ENCODE measurements at regions of chr10 and their contacts with region 1.

Region 1: GRCh38 chr10:63504125-63504880 is 16.9 kb upstream of the REEP3 start:
- DNase-seq: peak in 1 of 4 experiments; percentile 39
- ATAC-seq: peak; percentile 65
- H3K4me3 ChIP-seq: no peak overlapping the region
- H3K27ac ChIP-seq: peak overlapping the region; percentile 63
- H3K4me1 ChIP-seq: peaks cover 5 to 22% of the 10 kb centered on the region in 2 experiments; a peak in 4 of 5 replicates
- H3K27me3 ChIP-seq: no peaks in the 10 kb centered on the region
- CTCF ChIP-seq: peak in 1 of 3 experiments; percentile 23; a peak in 1 of 6 replicates
- EP300 ChIP-seq: no peak
- POLR2A ChIP-seq: no peak
- RAD21 ChIP-seq: no peak

Region 2: DNA sequence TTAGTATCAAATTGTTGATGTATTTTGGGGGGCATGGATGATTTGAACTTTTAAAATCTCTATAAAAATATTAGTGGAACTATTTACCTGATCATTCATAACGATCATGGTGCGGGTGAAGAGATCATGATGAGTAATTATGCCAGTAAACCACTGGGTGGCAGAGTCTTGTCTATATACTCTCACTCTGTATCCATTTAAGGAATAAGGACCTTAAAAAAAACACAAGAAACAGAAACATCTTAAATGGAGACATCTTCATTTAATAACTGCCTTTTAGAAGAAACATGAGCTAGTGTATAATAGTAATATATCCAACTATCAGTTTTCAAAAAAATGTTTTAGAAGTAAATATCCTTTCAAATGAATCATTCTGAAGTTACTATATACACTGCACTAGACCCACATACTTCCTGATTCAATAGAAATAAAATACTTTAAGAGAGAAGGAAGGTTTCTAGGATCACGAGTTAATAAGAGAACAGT is 287.1 kb before region 1 on chr10:
- CTCF ChIA-PET with region 1: no interaction called
- POLR2A ChIA-PET with region 1: no interaction called
- in situ Hi-C with region 1: no loop called
- intact Hi-C with region 1: no loop called
- DNase-seq: peak in 2 of 4 experiments; percentile 39 to 61
- ATAC-seq: peak; percentile 79
- H3K4me3 ChIP-seq: no peak overlapping the region
- H3K27ac ChIP-seq: no peak overlapping the region
- H3K4me1 ChIP-seq: no peaks in the 10 kb centered on the region
- H3K27me3 ChIP-seq: no peaks in the 10 kb centered on the region
- CTCF ChIP-seq: peak; percentile 38 to 77 (median 47); a peak in 3 of 6 replicates
- EP300 ChIP-seq: no peak
- POLR2A ChIP-seq: no peak
- RAD21 ChIP-seq: peak; percentile 87 to 90

Region 3: DNA sequence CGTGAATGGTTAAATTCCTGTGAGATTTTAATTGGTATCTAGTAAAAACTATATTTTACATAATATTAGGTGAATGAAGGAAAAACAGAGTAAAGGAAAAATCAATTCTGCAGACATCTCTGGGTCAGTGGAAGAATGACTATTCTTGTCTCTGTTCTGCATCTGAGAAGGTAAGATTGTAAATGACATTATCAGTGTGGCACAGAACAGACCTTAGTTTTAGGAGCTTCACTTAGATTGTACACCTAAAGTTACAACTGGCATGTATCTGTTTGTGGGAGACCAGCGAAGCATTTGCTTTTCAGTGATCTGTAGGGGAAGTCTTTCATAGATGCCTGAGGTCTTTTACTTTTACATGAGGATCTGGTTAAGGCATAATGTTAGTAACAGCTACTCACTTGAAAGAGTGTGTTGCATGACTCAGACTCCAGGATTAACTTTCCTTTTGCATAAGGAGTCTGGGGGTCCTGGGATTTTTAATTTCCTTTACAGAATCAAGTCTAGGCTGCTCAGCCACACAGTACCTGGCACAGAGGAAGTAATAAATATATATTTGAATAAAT is 94.8 kb before region 1 on chr10:
- CTCF ChIA-PET with region 1: no interaction called
- POLR2A ChIA-PET with region 1: no interaction called
- in situ Hi-C with region 1: no loop called
- intact Hi-C with region 1: no loop called
- DNase-seq: peak in 2 of 4 experiments; percentile 28 to 29
- ATAC-seq: peak; percentile 69
- H3K4me3 ChIP-seq: no peak overlapping the region
- H3K27ac ChIP-seq: peak overlapping the region; percentile 47; the same call in 1 of the 3 replicates
- H3K4me1 ChIP-seq: peaks cover 0 to 14% of the 10 kb centered on the region in 2 experiments; a peak in 3 of 5 replicates
- H3K27me3 ChIP-seq: no peaks in the 10 kb centered on the region
- CTCF ChIP-seq: no peak
- EP300 ChIP-seq: no peak
- POLR2A ChIP-seq: no peak
- RAD21 ChIP-seq: no peak

Region 4: DNA sequence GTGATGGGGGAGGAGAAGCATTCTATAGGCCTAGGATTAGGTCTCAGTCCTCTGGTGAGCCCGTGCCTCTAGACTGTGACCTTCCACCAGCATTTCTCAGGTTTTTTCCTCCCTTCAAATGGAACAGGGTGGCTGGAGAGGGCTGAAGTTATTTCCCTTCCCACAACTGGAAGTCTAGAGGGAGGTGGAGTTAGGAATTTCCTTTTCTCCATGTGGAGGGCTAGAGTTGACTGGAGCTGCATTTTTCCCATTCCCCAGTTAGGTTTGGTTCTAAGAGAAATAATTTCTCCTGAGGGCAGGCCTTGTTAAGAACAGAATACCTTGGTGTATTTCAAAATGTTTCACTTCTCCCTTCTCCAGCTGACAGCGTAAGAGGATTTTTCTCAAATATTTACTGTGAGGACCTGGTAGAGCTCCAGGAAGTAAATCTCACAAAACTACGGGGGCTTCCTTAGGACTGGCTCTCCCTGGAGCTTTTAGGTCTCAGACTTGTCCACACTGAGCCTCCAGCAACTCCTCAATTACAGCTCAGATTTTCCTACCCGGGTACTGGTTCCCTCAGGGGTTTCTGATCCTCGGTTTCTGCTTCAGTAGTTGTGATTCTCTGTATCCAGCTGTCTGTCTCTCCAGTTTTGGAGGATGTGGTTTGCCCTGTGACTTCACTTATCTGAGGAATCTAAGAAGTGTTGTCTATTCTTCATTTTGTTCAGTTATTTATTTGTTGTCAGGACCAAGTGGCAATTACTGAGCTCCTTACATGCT is 10.9 kb after region 1 on chr10:
- CTCF ChIA-PET with region 1: no interaction called
- POLR2A ChIA-PET with region 1: interaction called, 46 read pairs
- in situ Hi-C with region 1: no loop called
- intact Hi-C with region 1: no loop called
- DNase-seq: peak in 1 of 4 experiments; percentile 37
- ATAC-seq: peak; percentile 70
- H3K4me3 ChIP-seq: no peak overlapping the region
- H3K27ac ChIP-seq: no peak overlapping the region
- H3K4me1 ChIP-seq: no peaks in the 10 kb centered on the region; a peak in 3 of 5 replicates
- H3K27me3 ChIP-seq: no peaks in the 10 kb centered on the region
- CTCF ChIP-seq: no peak
- EP300 ChIP-seq: no peak
- POLR2A ChIP-seq: no peak
- RAD21 ChIP-seq: no peak

Measured in K562 (cell line).